Naive thymus-derived CD4-positive, alpha-beta T cell (primary cell): ENCODE measurements at regions of chr10 and their contacts with region 1.

Region 1: GRCh38 chr10:43396928-43397624 is 11.9 kb downstream of the HNRNPF start:
- DNase-seq: peak; percentile 61 to 85 (median 68)
- ATAC-seq: peak; percentile 78
- H3K4me3 ChIP-seq: peak overlapping the region; percentile 70
- H3K4me3 Mint-ChIP-seq: peak overlapping the region; percentile 90 to 100 (median 94)
- H3K27ac ChIP-seq: peak overlapping the region; percentile 89
- H3K27ac Mint-ChIP-seq: peak overlapping the region; percentile 87 to 99 (median 97)
- H3K4me1 ChIP-seq: peaks cover 55 to 66% of the 10 kb centered on the region in 2 donors
- H3K4me1 Mint-ChIP-seq: peaks cover 67 to 93% (median 81%) of the 10 kb centered on the region in 7 donors
- H3K27me3 ChIP-seq: no peaks in the 10 kb centered on the region
- H3K27me3 Mint-ChIP-seq: no peaks in the 10 kb centered on the region

Region 2: GRCh38 chr10:42782446-42783180 is 614.5 kb before region 1 on chr10 and contains the start of gene BMS1:
- CTCF ChIA-PET with region 1: no interaction called
- POLR2A ChIA-PET with region 1: no interaction called
- intact Hi-C with region 1: loop called (anchors 5 to 10 kb)
- DNase-seq: peak; percentile 78 to 91 (median 86)
- ATAC-seq: peak; percentile 95
- H3K4me3 ChIP-seq: peak within 1 kb of the TSS; percentile 86
- H3K4me3 Mint-ChIP-seq: peak within 1 kb of the TSS; percentile 89 to 100 (median 96)
- H3K27ac ChIP-seq: peak within 1 kb of the TSS; percentile 83
- H3K27ac Mint-ChIP-seq: peak within 1 kb of the TSS; percentile 88 to 98 (median 94)
- H3K4me1 ChIP-seq: peaks cover 0 to 13% of the 10 kb centered on the region in 2 donors
- H3K4me1 Mint-ChIP-seq: peaks cover 10 to 60% (median 45%) of the 10 kb centered on the region in 7 donors
- H3K27me3 ChIP-seq: no peaks in the 10 kb centered on the region
- H3K27me3 Mint-ChIP-seq: peaks cover 0 to 3% (median 0%) of the 10 kb centered on the region in 5 donors
- total RNA-seq, gene BMS1: 9.7 to 20.0 (median 16.9) TPM

Region 3: DNA sequence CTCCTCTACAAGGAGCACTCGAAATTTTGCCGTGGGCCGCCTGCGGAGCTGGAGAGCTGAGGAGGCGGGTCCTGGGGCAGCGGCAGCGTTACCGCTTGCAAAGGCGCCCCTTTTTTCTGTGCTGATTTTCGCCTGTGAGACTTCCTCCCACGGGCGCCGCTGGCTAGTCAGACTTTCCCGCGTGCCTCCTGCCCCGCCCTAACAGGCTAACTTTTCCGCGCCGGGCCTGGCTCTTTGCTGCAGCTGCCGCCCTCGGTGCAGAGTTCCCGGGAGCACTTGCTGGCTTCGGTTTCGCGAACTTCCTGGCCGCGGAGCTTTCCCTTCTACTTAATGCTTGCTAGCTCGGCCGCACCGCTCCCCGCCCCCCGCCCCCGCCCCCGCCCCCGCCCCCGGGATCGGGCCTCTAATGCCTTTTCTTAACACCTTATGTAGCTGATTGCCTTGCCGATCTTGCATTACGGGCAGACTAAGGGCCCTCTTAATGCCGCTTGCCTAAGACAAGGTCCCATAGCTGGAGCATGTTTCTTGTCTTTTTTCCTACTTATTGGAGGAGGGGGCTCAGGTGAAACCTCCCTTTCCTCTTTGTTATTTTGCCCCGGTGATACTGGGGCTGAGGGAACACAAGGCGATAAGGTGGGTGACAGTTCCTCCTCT is 92.3 kb before region 1 on chr10:
- CTCF ChIA-PET with region 1: no interaction called
- POLR2A ChIA-PET with region 1: no interaction called
- intact Hi-C with region 1: loop called in 1 of 2 experiments (anchors 5 kb)
- DNase-seq: peak in 7 of 9 donors; percentile 23 to 60 (median 32)
- ATAC-seq: peak; percentile 71
- H3K4me3 ChIP-seq: peak overlapping the region; percentile 30
- H3K4me3 Mint-ChIP-seq: peak overlapping the region; percentile 76 to 87 (median 82)
- H3K27ac ChIP-seq: no peak overlapping the region
- H3K27ac Mint-ChIP-seq: peak overlapping the region in 2 of 9 donors; percentile 76 to 80
- H3K4me1 ChIP-seq: peaks cover 21 to 23% of the 10 kb centered on the region in 2 donors
- H3K4me1 Mint-ChIP-seq: peaks cover 23 to 55% (median 47%) of the 10 kb centered on the region in 7 donors
- H3K27me3 ChIP-seq: no peaks in the 10 kb centered on the region
- H3K27me3 Mint-ChIP-seq: peaks cover 0 to 38% (median 6%) of the 10 kb centered on the region in 5 donors

Region 4: DNA sequence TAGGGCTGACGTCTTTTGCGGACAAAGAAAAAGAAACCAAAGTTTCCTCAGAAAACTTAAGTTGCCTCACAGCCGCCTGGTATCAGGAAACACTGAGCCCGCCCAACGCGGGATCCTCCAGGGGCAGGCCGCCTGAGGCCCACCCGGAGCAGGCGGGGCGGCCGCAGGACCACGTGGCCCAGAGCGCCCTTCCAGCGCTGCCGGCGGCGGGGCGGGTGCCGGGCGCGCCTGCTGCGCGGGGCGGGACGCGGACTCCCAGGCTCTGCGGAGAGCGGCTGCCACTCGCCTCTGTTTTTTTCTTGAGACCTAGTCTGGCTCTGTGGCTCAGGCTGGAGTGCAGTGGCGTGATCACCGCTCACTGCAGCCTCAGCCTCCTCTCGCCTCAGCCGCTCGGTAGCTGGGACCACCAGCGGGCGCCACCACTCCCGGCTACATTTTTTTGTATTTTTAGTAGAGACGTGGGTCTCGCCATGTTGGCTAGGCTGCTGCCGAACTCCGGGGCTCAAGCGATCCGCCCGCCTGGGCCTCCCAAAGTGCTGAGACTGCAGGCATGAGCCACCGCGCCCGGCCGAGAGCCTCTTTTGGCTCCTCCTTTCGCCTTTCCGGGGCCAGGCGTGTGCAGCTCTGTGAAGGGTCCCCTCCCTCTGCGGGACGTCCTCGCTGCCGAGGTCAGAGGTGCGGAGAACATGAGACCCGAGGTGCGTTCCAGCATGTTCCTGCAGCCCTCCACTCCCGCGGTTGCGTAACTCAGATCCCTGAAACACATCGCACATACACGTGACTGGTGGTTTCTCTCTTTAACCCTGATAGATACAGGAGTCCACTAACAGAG is 23.5 kb after region 1 on chr10:
- CTCF ChIA-PET with region 1: no interaction called
- POLR2A ChIA-PET with region 1: interaction called, 20 read pairs
- intact Hi-C with region 1: loop called (anchors 1 kb)
- DNase-seq: peak; percentile 69 to 86 (median 81)
- ATAC-seq: peak; percentile 94
- H3K4me3 ChIP-seq: peak overlapping the region; percentile 62
- H3K4me3 Mint-ChIP-seq: peak overlapping the region; percentile 87 to 98 (median 92)
- H3K27ac ChIP-seq: peak overlapping the region; percentile 95
- H3K27ac Mint-ChIP-seq: peak overlapping the region; percentile 91 to 99 (median 98)
- H3K4me1 ChIP-seq: peaks cover 24 to 29% of the 10 kb centered on the region in 2 donors
- H3K4me1 Mint-ChIP-seq: peaks cover 17 to 46% (median 41%) of the 10 kb centered on the region in 7 donors
- H3K27me3 ChIP-seq: no peaks in the 10 kb centered on the region
- H3K27me3 Mint-ChIP-seq: no peaks in the 10 kb centered on the region

Region 5: DNA sequence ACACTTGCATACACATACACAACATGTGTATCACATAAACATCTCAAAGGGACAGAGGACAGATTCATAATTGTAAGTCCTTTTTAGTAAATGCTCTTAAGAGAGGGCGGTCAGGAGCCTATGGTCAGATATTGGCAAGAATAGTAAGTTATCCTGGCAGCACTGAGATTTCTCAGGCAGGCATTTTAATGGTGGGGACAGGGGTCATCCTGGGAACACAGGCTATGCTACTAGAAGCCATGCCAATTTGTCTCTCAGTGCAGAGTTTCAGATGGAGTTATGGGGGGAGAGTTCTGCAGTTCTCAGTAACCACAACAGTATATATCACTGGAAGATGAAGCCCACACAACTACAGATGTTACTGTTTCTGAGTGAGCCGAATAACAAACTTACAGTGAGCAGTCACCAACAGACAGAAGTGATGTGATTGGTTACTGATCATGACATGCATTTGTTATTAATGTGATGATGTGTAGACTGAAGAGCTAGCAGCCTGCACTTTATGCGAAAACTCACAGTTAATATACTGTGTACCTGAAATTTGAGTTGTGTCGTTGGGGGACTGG is 56.3 kb after region 1 on chr10:
- CTCF ChIA-PET with region 1: interaction called, 4 read pairs
- POLR2A ChIA-PET with region 1: interaction called, 10 read pairs
- intact Hi-C with region 1: no loop called
- DNase-seq: no peak
- ATAC-seq: no peak
- H3K4me3 ChIP-seq: no peak overlapping the region
- H3K4me3 Mint-ChIP-seq: peak overlapping the region; percentile 16 to 95 (median 80)
- H3K27ac ChIP-seq: peak overlapping the region; percentile 64
- H3K27ac Mint-ChIP-seq: peak overlapping the region; percentile 95 to 100 (median 97)
- H3K4me1 ChIP-seq: peaks cover 36 to 51% of the 10 kb centered on the region in 2 donors
- H3K4me1 Mint-ChIP-seq: peaks cover 21 to 59% (median 48%) of the 10 kb centered on the region in 7 donors
- H3K27me3 ChIP-seq: no peaks in the 10 kb centered on the region
- H3K27me3 Mint-ChIP-seq: no peaks in the 10 kb centered on the region